PC-3 (cell line): ENCODE measurements at regions of chr4 and their contacts with region 1.

Region 1: GRCh38 chr4:68748181-68748991 is 67.4 kb upstream of the UGT2B10 start:
- DNase-seq: peak; percentile 98
- ATAC-seq: peak; percentile 87
- H3K4me3 ChIP-seq: peak overlapping the region; percentile 44; the same call in 1 of the 2 replicates
- H3K27ac ChIP-seq: peak overlapping the region; percentile 96
- H3K4me1 ChIP-seq: peaks cover 21% of the 10 kb centered on the region
- H3K27me3 ChIP-seq: no peaks in the 10 kb centered on the region
- CTCF ChIP-seq: no peak

Region 2: DNA sequence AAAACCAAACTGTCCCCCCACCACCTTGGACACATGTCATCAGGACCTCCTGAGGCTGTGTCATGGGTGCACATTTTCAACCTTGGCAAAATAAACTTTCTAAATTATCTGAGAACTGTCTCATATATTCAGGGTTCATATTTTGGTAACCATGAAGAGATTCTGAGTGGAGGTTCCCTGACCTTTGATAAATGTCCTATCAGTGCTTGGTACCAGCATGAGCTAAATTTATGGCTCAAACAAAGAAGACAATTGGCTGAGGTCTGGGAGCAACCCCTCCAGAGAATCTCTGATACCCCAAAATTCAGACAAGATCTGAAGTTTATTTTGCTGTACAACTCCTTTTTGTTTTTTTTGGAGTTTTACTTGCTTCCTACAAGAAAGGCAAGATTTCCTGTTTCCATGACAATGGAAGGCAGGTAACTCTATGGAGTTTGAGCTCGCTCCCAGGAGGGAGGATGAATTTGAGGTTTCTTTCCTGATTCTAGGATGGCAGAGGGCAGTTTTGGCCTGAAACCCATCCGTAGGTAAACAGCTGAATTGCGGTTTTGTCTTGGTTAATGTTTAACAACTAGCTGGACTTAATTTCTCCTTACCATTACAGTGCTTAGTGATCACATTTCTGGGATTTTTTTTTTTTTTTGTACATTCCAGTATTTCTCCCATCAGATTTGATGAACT is 92.5 kb before region 1 on chr4:
- CTCF ChIA-PET with region 1: no interaction called
- POLR2A ChIA-PET with region 1: no interaction called
- intact Hi-C with region 1: loop called (anchors 1 kb)
- DNase-seq: peak; percentile 90
- ATAC-seq: peak; percentile 72
- H3K4me3 ChIP-seq: peak overlapping the region; percentile 46
- H3K27ac ChIP-seq: peak overlapping the region; percentile 86
- H3K4me1 ChIP-seq: peaks cover 36% of the 10 kb centered on the region
- H3K27me3 ChIP-seq: no peaks in the 10 kb centered on the region
- CTCF ChIP-seq: no peak

Region 3: DNA sequence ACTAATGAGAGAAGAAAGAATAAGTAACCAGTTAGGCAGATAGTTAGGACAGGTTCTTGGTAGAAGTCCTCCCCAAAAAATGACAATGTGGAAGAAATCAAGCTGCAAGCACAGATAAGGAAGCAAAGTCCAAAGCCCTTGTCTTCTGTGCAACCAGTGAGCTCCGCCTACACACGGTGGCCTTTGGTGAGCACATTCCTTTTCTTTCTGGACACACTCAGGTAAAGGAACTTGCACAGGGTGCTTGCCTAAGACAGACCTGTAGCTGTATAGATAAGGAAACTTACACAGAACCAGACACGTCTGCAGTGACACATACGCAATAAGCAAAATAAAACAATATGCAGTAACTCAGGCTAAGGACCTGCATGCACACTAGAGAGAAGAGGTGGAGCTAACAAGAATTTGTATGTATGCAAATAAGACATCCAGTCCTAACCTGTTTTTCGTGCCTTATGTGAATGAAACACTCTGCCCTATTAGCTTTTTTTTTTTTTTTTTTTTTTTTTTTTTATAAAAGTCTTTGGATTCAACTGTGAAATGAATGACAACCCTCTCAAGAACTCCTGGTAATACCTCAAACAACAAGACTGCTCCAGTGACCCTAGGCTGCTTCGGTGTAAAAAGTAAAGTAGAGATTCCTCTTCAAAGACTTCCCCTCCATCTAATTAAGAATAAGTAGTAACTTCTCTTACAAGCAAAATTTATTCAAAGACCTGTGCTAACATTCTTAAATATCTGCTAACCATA is 116.2 kb after region 1 on chr4:
- CTCF ChIA-PET with region 1: no interaction called
- POLR2A ChIA-PET with region 1: interaction called, 6 read pairs
- intact Hi-C with region 1: loop called (anchors 2 kb)
- DNase-seq: peak; percentile 48
- ATAC-seq: peak; percentile 71
- H3K4me3 ChIP-seq: no peak overlapping the region
- H3K27ac ChIP-seq: peak overlapping the region; percentile 42
- H3K4me1 ChIP-seq: peaks cover 21% of the 10 kb centered on the region
- H3K27me3 ChIP-seq: no peaks in the 10 kb centered on the region
- CTCF ChIP-seq: no peak

Region 4: GRCh38 chr4:69038582-69038981 is 290.2 kb after region 1 on chr4:
- CTCF ChIA-PET with region 1: no interaction called
- POLR2A ChIA-PET with region 1: no interaction called
- intact Hi-C with region 1: loop called (anchors 2 kb)
- DNase-seq: peak; percentile 92
- ATAC-seq: peak; percentile 96
- H3K4me3 ChIP-seq: no peak overlapping the region
- H3K27ac ChIP-seq: peak overlapping the region; percentile 74
- H3K4me1 ChIP-seq: peaks cover 17% of the 10 kb centered on the region
- H3K27me3 ChIP-seq: no peaks in the 10 kb centered on the region
- CTCF ChIP-seq: no peak